Activated CD8-positive, alpha-beta T cell treated with anti-CD3 and anti-CD28 coated beads for 36 hours (primary cell): ENCODE measurements at regions of chr11 and their contacts with region 1.

Region 1: DNA sequence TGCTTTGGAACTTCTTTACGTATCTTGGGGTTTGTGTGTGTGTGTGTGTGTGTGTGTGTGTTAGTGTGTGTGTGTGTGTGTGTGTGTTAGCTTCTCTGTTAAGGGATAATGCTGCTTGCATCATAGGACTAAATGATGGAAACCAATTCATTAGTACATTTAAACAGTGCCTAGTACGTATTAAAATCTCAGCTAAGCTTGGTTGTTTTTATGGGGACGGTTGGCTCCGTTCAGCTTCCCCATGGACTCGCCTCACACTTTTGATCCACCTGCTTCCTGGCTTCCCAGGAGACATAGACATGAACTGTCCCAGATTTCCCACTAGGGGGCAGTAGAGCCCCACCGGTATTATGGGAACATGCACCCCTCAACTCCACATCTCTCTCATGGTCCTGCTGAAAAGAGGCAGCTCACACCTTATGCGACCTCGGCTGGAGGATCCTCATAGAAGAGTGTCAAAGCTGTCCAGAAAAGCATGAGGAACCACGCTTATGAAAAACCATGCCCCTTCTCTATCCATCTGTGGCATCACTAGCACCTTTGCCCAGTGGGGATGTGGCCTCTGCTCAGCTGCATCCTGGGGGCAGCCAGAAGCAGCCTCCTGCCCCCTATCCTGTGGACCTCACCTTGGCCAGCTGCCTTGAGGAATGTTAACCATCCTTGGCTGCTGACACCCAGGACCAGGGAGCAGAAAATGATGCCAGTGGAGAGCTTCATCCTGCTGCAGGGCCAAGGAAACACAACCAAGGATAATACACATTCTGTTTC is 9.7 kb upstream of the SAAL1 start:
- DNase-seq: peak; percentile 72
- ATAC-seq: peak; percentile 91
- H3K4me3 Mint-ChIP-seq: no peak overlapping the region
- H3K27ac Mint-ChIP-seq: no peak overlapping the region
- H3K4me1 Mint-ChIP-seq: no peaks in the 10 kb centered on the region
- H3K27me3 Mint-ChIP-seq: peaks cover 7% of the 10 kb centered on the region
- CTCF ChIP-seq: peak; percentile 84

Region 2: GRCh38 chr11:17986711-17987220 is 128.8 kb before region 1 on chr11:
- CTCF ChIA-PET with region 1: interaction called, 10 read pairs
- POLR2A ChIA-PET with region 1: no interaction called
- intact Hi-C with region 1: no loop called
- DNase-seq: no peak
- ATAC-seq: peak; percentile 58
- H3K4me3 Mint-ChIP-seq: no peak overlapping the region
- H3K27ac Mint-ChIP-seq: no peak overlapping the region
- H3K4me1 Mint-ChIP-seq: no peaks in the 10 kb centered on the region
- H3K27me3 Mint-ChIP-seq: no peaks in the 10 kb centered on the region
- CTCF ChIP-seq: no peak

Region 3: GRCh38 chr11:18091731-18092130 is 23.8 kb before region 1 on chr11:
- CTCF ChIA-PET with region 1: interaction called, 16 read pairs
- POLR2A ChIA-PET with region 1: interaction called, 3 read pairs
- intact Hi-C with region 1: no loop called
- DNase-seq: no peak
- ATAC-seq: no peak
- H3K4me3 Mint-ChIP-seq: no peak overlapping the region
- H3K27ac Mint-ChIP-seq: peak overlapping the region; percentile 4
- H3K4me1 Mint-ChIP-seq: peaks cover 5% of the 10 kb centered on the region
- H3K27me3 Mint-ChIP-seq: no peaks in the 10 kb centered on the region
- CTCF ChIP-seq: no peak

Region 4: GRCh38 chr11:18203723-18204122 is 88.2 kb after region 1 on chr11:
- CTCF ChIA-PET with region 1: interaction called, 41 read pairs
- POLR2A ChIA-PET with region 1: interaction called, 3 read pairs
- intact Hi-C with region 1: loop called (anchors 2 kb)
- DNase-seq: peak; percentile 22
- ATAC-seq: peak; percentile 77
- H3K4me3 Mint-ChIP-seq: no peak overlapping the region
- H3K27ac Mint-ChIP-seq: no peak overlapping the region
- H3K4me1 Mint-ChIP-seq: no peaks in the 10 kb centered on the region
- H3K27me3 Mint-ChIP-seq: peaks cover 36% of the 10 kb centered on the region
- CTCF ChIP-seq: peak; percentile 60